Activated naive CD8-positive, alpha-beta T cell treated with anti-CD3 and anti-CD28 coated beads, Interleukin-2, amount 10 ng/mL, durations not matched to agents 7 days and 5 days (primary cell): ENCODE measurements at regions of chr4 and their contacts with region 1.

Region 1: DNA sequence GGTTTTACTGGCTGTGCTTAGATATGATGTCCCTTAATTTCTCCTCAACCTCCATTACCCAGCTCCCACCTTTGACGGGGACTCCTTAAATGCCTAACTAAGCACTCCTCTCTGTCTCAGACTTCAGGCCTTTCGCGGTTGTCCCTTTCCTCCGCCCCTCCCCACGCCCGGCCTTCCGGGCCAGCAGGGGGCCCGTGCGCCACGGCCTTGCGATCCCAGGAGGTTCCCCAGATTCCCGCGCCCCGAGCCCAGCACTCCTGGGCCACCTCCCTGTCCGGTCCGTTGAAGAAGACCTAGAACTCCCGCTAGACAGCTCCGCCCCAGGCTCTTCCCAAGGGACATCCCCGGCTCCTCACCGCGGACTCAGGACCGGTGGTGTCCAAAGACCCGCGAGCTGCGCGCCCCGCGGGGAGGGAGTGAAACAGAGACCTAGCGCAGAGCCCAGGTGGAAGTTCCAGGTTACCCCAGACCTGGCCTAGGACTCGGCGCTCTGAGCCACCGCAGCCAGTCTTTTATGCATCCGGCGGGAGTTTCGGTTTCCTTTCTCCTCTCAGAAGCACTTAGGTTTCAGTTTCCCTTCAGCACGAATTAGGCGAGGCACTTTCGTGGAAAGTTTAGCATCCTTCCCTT is at the start of gene DDX60:
- DNase-seq: peak; percentile 84
- ATAC-seq: peak; percentile 94
- H3K4me3 Mint-ChIP-seq: peak within 1 kb of the TSS; percentile 95
- H3K27ac Mint-ChIP-seq: peak within 1 kb of the TSS; percentile 89
- H3K4me1 Mint-ChIP-seq: peaks cover 57% of the 10 kb centered on the region
- H3K27me3 Mint-ChIP-seq: no peaks in the 10 kb centered on the region
- total RNA-seq, gene DDX60: 137 to 141 TPM

Region 2: DNA sequence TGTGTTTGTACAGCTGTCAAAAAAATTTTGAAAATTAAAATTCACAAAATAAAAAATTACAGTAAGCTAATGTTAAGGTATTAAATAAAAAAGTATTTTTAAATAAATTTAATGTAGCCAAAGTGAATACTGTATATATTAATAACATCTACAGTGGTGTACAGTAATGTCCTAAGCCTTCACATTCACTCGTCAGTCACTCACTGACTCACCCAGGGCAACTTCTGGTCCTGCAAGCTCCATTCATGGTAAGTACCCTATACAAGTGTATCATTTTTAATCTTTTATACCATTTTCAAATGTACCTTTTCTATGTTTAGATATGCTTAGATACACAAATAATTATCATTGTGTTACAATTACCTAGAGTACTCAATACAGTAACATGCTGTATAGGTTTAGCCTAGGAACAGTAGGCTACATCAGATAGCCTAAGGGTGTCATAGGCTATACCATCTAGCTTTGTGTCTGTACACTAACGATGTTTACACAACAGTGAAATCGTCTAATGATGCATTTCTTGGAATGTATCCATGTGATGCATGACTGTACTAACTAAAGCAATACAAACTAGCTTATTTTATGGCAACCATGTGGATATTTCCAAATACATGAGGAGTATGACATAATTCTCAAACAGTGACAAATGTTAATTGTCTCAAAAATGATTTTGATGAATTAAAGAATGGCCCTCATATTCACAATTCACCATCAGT is 13.5 kb before region 1 on chr4:
- POLR2A ChIA-PET with region 1: interaction called, 38 read pairs
- DNase-seq: no peak
- ATAC-seq: no peak
- H3K4me3 Mint-ChIP-seq: no peak overlapping the region
- H3K27ac Mint-ChIP-seq: no peak overlapping the region
- H3K4me1 Mint-ChIP-seq: peaks cover 38% of the 10 kb centered on the region
- H3K27me3 Mint-ChIP-seq: no peaks in the 10 kb centered on the region